Left ventricle myocardium inferior (tissue), 1 donor: ENCODE measurements at regions of chr15 and their contacts with region 1.

Region 1: DNA sequence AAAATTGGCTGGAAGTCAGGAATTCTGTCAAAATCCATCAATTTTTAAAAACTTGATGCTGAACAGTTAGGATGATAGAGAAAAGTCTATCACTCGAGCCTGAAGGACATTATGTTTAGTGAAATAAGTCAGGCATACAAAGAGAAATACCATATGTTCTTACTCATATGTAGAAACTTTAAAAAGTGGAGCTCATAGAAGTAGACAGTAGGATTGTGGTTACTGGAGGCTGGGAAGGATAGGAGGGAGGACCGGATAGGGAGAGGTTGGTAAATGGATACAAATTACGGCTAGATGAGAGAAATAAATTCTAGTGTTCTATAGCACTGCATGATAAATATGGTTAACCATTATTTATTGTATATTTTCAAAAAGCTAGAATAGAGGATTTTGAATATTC is 389.5 kb upstream of the RASGRP1 start:
- DNase-seq: no peak
- H3K4me3 ChIP-seq: no peak overlapping the region
- H3K27ac ChIP-seq: no peak overlapping the region
- H3K4me1 ChIP-seq: no peaks in the 10 kb centered on the region
- H3K27me3 ChIP-seq: no peaks in the 10 kb centered on the region
- CTCF ChIP-seq: no peak

Region 2: GRCh38 chr15:39016706-39017105 is 62.6 kb after region 1 on chr15:
- intact Hi-C with region 1: loop called (anchors 10 kb)
- DNase-seq: no peak
- H3K4me3 ChIP-seq: no peak overlapping the region
- H3K27ac ChIP-seq: no peak overlapping the region
- H3K4me1 ChIP-seq: no peaks in the 10 kb centered on the region
- H3K27me3 ChIP-seq: no peaks in the 10 kb centered on the region
- CTCF ChIP-seq: no peak